AG04449 (cell line): ENCODE measurements at regions of chr11 and their contacts with region 1.

Region 1: DNA sequence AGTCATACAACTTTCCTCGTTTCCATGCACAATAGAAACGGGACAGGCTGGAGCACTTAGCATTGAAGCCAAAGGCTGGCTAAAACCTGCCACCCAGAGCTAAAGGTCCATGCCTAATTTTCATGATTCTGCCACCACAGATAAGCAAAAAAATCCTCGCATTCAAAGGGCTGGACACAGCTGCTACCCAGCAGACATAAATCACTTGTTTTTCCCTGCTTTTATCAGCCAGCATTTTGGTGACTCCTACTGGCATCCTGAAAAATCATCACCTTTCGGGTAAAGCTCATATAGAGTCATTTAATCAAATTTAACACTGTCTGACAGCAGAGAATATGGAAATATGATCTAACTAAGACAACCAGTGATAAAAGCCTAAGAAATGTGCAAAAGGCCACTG is 37.9 kb downstream of the ALG9 start:
- DNase-seq: no peak
- H3K4me3 ChIP-seq: no peak overlapping the region
- CTCF ChIP-seq: no peak

Region 2: DNA sequence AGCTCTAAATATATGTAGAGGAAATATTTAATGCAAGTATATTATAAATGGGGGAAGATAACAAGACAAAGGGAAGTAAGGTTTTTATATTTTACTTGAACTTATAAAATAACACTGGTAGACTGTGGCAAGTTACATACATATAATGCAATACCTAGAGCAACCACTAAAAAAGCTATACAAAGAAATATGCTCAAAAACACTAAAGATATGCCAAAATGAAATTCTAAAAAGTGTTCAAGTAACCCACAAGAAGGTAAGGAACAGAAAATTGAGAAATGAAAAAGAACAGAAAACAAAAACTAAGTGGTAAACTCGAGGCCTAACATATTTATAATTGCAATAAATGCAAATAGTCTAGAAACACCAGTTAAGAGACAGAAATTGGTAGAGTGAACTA is 353.9 kb before region 1 on chr11:
- CTCF ChIA-PET with region 1: no interaction called
- POLR2A ChIA-PET with region 1: no interaction called
- DNase-seq: no peak
- H3K4me3 ChIP-seq: no peak overlapping the region
- CTCF ChIP-seq: no peak

Region 3: GRCh38 chr11:111819161-111819828 is 14.2 kb before region 1 on chr11:
- CTCF ChIA-PET with region 1: interaction called, 14 read pairs
- POLR2A ChIA-PET with region 1: no interaction called
- DNase-seq: peak; percentile 72
- H3K4me3 ChIP-seq: no peak overlapping the region
- CTCF ChIP-seq: no peak

Region 4: GRCh38 chr11:112128483-112129121 is 295.1 kb after region 1 on chr11:
- CTCF ChIA-PET with region 1: no interaction called
- POLR2A ChIA-PET with region 1: no interaction called
- DNase-seq: peak; percentile 34
- H3K4me3 ChIP-seq: no peak overlapping the region
- CTCF ChIP-seq: no peak